Aorta (tissue), 5 donors: ENCODE measurements at regions of chr11 and their contacts with region 1.

Region 1: DNA sequence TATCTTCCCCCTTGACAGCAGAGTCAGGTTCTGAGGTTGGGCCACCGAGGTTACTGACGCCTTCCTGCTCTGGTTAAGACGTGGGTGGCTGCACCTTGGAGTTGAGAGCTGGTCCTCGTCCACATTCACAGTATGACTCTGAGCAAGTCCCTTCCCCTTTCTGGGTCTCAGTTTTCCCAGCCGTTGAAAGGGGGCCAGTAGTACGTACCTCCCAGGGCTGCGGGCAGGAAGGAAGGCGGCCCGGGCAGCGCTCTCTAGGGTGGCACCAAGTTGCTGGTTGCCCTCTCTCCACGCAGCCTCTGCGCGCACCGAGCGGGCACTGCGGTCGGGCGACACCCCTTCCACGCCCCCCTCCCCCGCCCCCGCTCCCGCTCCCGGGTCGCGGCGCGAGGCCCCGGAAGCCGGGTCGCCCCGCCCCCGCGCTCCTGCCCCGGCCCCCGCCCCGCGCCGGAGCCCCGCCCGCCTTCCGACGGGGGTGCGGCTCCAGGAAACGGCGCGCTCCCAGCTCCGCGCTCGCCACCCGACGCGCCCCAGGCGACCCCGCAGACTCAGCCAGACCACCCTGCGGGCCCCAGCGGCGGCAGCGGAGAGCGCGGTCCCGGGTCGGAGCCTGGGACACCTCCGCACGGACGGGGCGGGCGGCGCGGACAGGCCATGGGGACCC is at the start of gene EHBP1L1:
- DNase-seq: peak; percentile 86 to 93
- ATAC-seq: peak; percentile 17
- H3K4me3 ChIP-seq: peak within 1 kb of the TSS; percentile 82 to 84
- H3K27ac ChIP-seq: peak within 1 kb of the TSS; percentile 25 to 78
- H3K4me1 ChIP-seq: no peaks in the 10 kb centered on the region
- H3K27me3 ChIP-seq: no peaks in the 10 kb centered on the region
- total RNA-seq, gene EHBP1L1: 235 to 266 TPM

Region 2: GRCh38 chr11:65593518-65594298 is 18.0 kb after region 1 on chr11:
- intact Hi-C with region 1: loop called in 1 of 2 experiments (anchors 2 kb)
- DNase-seq: peak; percentile 75 to 83
- ATAC-seq: peak; percentile 62
- H3K4me3 ChIP-seq: no peak overlapping the region
- H3K27ac ChIP-seq: no peak overlapping the region
- H3K4me1 ChIP-seq: no peaks in the 10 kb centered on the region
- H3K27me3 ChIP-seq: no peaks in the 10 kb centered on the region

Region 3: GRCh38 chr11:65692367-65692766 is 116.7 kb after region 1 on chr11:
- intact Hi-C with region 1: no loop called
- DNase-seq: no peak
- ATAC-seq: no peak
- H3K4me3 ChIP-seq: no peak overlapping the region
- H3K27ac ChIP-seq: no peak overlapping the region
- H3K4me1 ChIP-seq: no peaks in the 10 kb centered on the region
- H3K27me3 ChIP-seq: no peaks in the 10 kb centered on the region